ENCODE measurements at regions of chr20 and their contacts with region 1.

Region 1: DNA sequence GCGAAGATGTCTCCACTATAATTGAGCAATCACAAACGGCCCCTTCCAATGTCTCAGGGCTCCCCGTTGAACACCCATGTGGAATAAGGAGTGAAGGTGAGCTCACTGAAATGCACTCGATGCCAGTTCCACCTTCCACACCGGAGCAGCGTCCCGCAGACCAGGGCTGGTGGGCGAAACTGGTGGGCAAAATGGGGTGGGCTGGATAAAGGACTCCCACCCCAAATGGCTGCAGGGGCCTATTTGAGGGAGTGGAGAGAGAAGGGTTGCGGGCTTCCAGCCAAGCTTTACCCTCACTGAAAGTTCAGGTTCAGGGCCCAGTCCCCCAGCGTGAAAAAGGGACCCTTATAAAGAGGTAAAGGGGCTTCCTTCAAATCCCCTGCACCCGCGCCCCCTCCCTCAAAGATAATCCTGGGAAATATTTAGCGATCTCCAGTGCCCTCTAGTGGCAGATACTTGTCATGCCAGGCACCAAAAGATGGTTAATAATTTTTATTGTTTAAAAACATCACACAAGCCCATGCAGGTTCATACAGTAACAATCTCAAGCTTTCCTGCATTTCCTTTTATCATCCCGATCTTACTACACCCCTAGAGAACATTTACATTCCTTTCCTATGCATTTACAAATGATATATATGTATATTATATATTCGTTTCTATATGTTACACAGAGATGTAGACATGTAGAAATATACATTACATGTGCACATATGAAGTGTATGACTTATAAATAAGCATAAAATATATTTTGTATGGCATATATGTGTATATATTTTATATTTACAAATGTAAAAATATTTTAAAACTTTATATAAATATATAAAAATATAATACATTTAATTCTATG is 58.2 kb upstream of the NKX2-2 start:
- DNase-seq: peak in 2 of 10 donors; percentile 25 to 36

Region 2: GRCh38 chr20:21251278-21251677 is 320.8 kb before region 1 on chr20:
- intact Hi-C with region 1: no loop called
- DNase-seq: no peak

Region 3: GRCh38 chr20:21529863-21530262 is 42.2 kb before region 1 on chr20:
- intact Hi-C with region 1: loop called (anchors 5 kb)
- DNase-seq: no peak

Region 4: DNA sequence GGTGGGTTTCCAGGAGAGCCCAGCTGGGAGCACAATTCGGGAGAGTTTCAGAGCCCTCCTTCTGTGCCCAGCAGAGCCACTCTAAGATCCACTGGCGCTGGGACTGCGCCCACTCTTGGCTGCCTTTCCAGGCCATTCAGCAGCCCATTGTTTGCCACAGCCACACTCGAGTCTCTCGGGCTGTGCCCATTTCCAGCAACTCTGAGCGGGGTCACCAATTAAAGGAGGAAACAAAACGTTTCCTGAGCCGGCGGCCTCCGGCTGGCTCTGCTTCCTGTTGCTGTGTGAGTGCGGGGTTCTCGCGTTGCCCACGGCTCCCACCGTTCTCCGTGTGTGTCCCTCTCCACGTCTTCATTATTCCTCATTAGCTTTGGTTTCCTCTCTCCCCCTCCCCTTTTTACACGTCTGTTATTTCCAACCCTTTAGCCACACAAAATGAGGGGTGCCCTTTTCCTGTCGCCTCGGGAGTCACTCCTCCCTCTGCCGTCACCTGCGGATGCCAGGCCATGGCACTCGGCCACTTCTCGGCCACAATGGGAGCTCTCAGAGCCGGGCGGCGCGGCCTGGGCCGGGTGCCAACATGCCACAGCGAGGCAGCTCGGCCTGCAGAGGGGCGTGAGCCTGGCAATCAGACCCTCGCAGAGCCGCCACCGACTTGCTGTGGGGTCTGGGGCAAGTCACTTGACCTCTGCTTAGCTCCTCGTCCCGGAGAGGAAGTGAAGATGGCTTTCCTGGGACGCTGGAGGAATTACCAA is 36.1 kb after region 1 on chr20:
- intact Hi-C with region 1: loop called (anchors 5 kb)
- DNase-seq: peak; percentile 83 to 98 (median 92)

Measured in posterior cingulate gyrus (tissue), 11 donors.